ENCODE measurements at regions of chr2 and their contacts with region 1.

Region 1: GRCh38 chr2:88739985-88740600 is 48.6 kb downstream of the RPIA start:
- DNase-seq: peak; percentile 50 to 76
- ATAC-seq: peak; percentile 45 to 71 (median 60)
- H3K4me3 ChIP-seq: no peak overlapping the region
- H3K27ac ChIP-seq: peak overlapping the region; percentile 48
- H3K4me1 ChIP-seq: peaks cover 32% of the 10 kb centered on the region
- H3K27me3 ChIP-seq: no peaks in the 10 kb centered on the region
- CTCF ChIP-seq: peak; percentile 94

Region 2: DNA sequence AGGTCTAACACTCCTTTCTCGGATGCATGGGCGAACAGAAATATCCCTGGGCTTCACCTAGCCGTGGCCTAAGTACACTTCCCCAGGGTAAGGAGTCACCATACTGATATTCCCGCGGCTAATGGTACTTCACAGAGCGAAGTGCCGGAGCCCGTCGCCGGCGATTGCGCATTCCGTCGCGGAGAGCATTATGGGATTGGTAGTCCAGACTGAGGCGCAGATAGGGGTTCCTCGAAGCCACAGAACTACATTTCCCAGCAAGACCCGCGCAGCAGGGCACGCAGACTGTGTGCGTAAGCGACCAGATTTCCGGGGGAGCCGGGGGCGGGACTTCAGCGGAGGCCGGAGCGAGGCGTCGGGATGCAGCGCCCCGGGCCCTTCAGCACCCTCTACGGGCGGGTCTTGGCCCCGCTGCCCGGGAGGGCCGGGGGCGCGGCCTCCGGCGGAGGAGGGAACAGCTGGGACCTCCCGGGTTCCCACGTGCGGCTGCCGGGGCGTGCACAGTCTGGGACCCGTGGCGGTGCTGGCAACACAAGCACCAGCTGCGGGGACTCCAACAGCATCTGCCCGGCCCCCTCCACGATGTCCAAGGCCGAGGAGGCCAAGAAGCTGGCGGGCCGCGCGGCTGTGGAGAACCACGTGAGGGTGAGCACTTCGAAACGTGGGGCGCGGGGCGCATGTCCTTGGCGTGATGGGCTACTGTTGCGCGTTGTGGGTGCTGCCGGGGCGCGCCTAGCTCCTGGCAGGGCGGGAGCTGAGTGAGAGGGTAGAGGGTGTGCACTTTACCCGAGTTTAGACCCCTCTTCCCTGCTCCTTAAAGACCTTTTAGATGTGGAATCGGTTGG is 48.5 kb before region 1 on chr2 and contains the start of gene RPIA:
- intact Hi-C with region 1: loop called in 1 of 2 experiments (anchors 5 kb)
- DNase-seq: peak; percentile 100
- ATAC-seq: peak; percentile 94 to 96 (median 94)
- H3K4me3 ChIP-seq: peak within 1 kb of the TSS; percentile 80
- H3K27ac ChIP-seq: peak within 1 kb of the TSS; percentile 87
- H3K4me1 ChIP-seq: peaks cover 48% of the 10 kb centered on the region
- H3K27me3 ChIP-seq: no peaks in the 10 kb centered on the region
- CTCF ChIP-seq: peak; percentile 61
- total RNA-seq, gene RPIA: 14.1 to 22.5 (median 20.1) TPM

Region 3: GRCh38 chr2:88810017-88810416 is 69.9 kb after region 1 on chr2:
- intact Hi-C with region 1: loop called in 1 of 2 experiments (anchors 10 kb)
- DNase-seq: no peak
- ATAC-seq: no peak
- H3K4me3 ChIP-seq: no peak overlapping the region
- H3K27ac ChIP-seq: no peak overlapping the region
- H3K4me1 ChIP-seq: no peaks in the 10 kb centered on the region
- H3K27me3 ChIP-seq: peaks cover 0 to 7% (median 2%) of the 10 kb centered on the region in 3 donors
- CTCF ChIP-seq: no peak

Region 4: DNA sequence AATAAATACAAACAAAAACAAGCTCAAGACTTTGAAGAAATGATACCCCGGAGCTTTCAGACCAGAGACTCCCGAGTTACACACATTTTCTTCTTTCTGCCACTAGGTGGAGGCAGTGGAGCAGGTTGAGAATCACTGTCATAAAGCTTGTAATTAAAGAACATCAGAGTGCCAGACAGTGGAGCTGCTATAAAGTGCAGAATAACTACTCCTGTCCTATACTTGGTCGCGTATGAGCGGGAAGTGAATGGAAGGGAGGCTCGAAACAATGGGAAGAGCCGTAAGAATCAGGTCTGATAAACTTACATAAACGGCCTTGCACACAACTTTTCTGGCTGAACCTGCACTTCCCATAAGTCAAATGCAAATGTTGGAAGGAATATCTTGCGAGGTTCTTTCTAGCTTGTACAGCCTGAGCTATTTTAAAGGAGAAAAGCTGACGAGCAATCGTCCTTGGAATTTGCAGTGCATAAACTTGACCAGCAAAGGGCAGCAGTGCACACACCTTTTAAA is 140.4 kb after region 1 on chr2:
- intact Hi-C with region 1: loop called in 1 of 2 experiments (anchors 5 kb)
- DNase-seq: no peak
- ATAC-seq: peak; percentile 67 to 88 (median 78)
- H3K4me3 ChIP-seq: no peak overlapping the region
- H3K27ac ChIP-seq: no peak overlapping the region
- H3K4me1 ChIP-seq: no peaks in the 10 kb centered on the region
- H3K27me3 ChIP-seq: peaks cover 0 to 3% (median 0%) of the 10 kb centered on the region in 3 donors
- CTCF ChIP-seq: peak; percentile 80